Right cardiac atrium (tissue), 5 donors: ENCODE measurements at regions of chr1 and their contacts with region 1.

Region 1: GRCh38 chr1:31196685-31197084 is 43.0 kb downstream of the NKAIN1 start:
- DNase-seq: no peak
- ATAC-seq: no peak
- H3K4me3 ChIP-seq: no peak overlapping the region
- H3K27ac ChIP-seq: no peak overlapping the region
- H3K4me1 ChIP-seq: no peaks in the 10 kb centered on the region
- H3K27me3 ChIP-seq: no peaks in the 10 kb centered on the region

Region 2: GRCh38 chr1:31259746-31260145 is 63.1 kb after region 1 on chr1:
- intact Hi-C with region 1: loop called in 1 of 4 experiments (anchors 10 kb)
- DNase-seq: no peak
- ATAC-seq: no peak
- H3K4me3 ChIP-seq: no peak overlapping the region
- H3K27ac ChIP-seq: no peak overlapping the region
- H3K4me1 ChIP-seq: peaks cover 2% of the 10 kb centered on the region
- H3K27me3 ChIP-seq: no peaks in the 10 kb centered on the region

Region 3: GRCh38 chr1:31296486-31297276 is 100.0 kb after region 1 on chr1 and contains the starts of genes SNRNP40 and ZCCHC17:
- intact Hi-C with region 1: no loop called
- DNase-seq: peak; percentile 95 to 98 (median 97)
- ATAC-seq: peak; percentile 100
- H3K4me3 ChIP-seq: peak within 1 kb of the TSS; percentile 88
- H3K27ac ChIP-seq: peak within 1 kb of the TSS; percentile 94
- H3K4me1 ChIP-seq: peaks cover 8% of the 10 kb centered on the region
- H3K27me3 ChIP-seq: no peaks in the 10 kb centered on the region
- total RNA-seq, gene SNRNP40: 20.9 to 28.2 (median 25.3) TPM
- total RNA-seq, gene ZCCHC17: 14.7 to 21.7 (median 20.0) TPM

Region 4: DNA sequence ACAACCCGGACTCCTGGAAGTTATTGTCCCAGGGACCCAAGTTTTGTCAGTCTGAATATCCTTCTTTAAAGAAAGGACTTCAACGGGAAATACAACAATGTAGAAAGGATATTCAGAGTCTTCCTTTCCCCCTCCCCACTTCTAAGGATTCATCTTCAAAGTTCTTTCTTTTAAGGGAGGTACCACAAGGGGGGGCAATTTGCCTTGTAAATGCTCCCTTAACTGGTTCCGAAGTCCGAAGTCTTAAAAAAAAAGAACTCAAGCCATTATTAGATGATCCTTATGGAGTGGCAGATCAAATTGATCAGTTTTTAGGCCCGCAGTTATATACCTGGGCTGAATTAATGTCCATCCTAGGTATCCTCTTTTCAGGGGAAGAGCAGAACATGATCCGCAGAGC is 263.3 kb after region 1 on chr1:
- intact Hi-C with region 1: no loop called
- DNase-seq: no peak
- ATAC-seq: no peak
- H3K4me3 ChIP-seq: no peak overlapping the region
- H3K27ac ChIP-seq: no peak overlapping the region
- H3K4me1 ChIP-seq: no peaks in the 10 kb centered on the region
- H3K27me3 ChIP-seq: peaks cover 2% of the 10 kb centered on the region

Region 5: DNA sequence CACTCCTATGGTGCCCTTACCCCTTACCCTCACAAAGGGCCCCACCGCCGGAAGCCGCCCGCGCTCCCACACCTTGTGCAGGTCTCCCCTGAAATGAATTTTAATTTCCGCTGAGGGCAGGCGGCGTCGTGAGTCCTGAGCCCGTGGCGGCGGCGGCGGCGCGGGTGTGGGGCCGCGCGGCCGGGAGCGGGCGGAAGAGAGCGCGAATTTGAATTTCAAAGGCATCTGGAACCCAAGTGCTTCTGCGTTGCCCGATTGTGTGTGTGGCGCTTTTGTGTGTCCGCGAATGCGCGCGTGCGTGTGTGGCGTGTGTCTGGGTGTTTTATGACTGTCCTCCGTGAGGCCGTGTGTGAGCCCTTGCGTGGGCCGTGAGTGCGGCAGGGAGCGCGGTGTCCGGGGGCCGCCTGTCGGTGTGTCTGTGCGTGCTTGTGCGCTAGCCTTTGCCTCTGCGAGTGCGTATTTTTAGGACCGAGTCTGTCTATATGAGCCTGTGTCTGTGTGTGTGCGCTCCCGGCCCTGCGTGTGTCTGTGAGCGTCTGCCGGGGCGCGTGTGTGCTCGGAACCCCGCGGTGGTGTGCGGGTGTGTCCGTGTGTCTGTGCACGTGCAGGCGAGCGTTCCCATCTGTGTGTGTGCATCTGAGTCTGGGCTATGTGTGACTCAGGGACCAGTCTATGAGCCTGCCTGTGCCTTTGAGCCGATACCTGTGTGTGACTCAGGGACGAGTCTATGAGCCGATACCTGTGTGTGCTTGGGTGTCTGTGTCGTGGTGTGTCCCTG is 575.4 kb after region 1 on chr1:
- intact Hi-C with region 1: no loop called
- DNase-seq: peak in 1 of 3 donors; percentile 65
- ATAC-seq: peak in 1 of 2 donors; percentile 6
- H3K4me3 ChIP-seq: no peak overlapping the region
- H3K27ac ChIP-seq: no peak overlapping the region
- H3K4me1 ChIP-seq: no peaks in the 10 kb centered on the region
- H3K27me3 ChIP-seq: no peaks in the 10 kb centered on the region